Caco-2 (cell line): ENCODE measurements at regions of chr2 and their contacts with region 1.

Region 1: GRCh38 chr2:222318026-222318711 is 19.4 kb upstream of the PAX3 start:
- DNase-seq: peak; percentile 74 to 83
- H3K4me3 ChIP-seq: peak overlapping the region; percentile 35
- H3K4me3 Mint-ChIP-seq: peak overlapping the region; percentile 79
- H3K27ac Mint-ChIP-seq: no peak overlapping the region
- H3K4me1 ChIP-seq: peaks cover 12% of the 10 kb centered on the region
- H3K4me1 Mint-ChIP-seq: no peaks in the 10 kb centered on the region
- H3K27me3 ChIP-seq: peaks cover 3% of the 10 kb centered on the region; the same call in 1 of the 2 replicates
- H3K27me3 Mint-ChIP-seq: peaks cover 34% of the 10 kb centered on the region
- CTCF ChIP-seq: peak; percentile 56 to 70

Region 2: GRCh38 chr2:222038067-222038802 is 279.9 kb before region 1 on chr2:
- CTCF ChIA-PET with region 1: interaction called, 8 read pairs
- POLR2A ChIA-PET with region 1: no interaction called
- intact Hi-C with region 1: loop called (anchors 5 kb)
- DNase-seq: peak in 1 of 2 experiments; percentile 18
- H3K4me3 ChIP-seq: no peak overlapping the region
- H3K4me3 Mint-ChIP-seq: no peak overlapping the region
- H3K27ac Mint-ChIP-seq: no peak overlapping the region
- H3K4me1 ChIP-seq: no peaks in the 10 kb centered on the region
- H3K4me1 Mint-ChIP-seq: no peaks in the 10 kb centered on the region
- H3K27me3 ChIP-seq: no peaks in the 10 kb centered on the region
- H3K27me3 Mint-ChIP-seq: no peaks in the 10 kb centered on the region
- CTCF ChIP-seq: peak; percentile 61 to 63

Region 3: DNA sequence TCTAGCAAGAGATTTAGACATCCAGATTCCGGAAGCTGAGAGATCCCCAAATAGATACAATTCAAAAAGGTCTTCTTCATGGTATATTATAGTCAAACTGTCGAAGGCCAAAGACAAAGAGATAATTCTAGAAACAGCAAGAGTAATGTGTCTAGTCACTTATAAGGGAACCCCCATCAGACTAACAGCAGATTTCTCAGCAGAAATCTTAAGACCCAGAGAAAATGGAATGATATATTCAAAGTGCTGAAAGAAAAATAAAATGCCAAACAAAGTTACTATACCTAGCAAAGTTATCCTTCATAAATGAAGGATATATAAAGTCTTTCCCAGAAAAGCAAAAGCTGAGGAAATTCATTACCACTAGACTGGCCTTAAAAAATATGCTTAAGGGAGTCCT is 16.7 kb after region 1 on chr2:
- CTCF ChIA-PET with region 1: interaction called, 16 read pairs
- POLR2A ChIA-PET with region 1: no interaction called
- intact Hi-C with region 1: no loop called
- DNase-seq: no peak
- H3K4me3 ChIP-seq: no peak overlapping the region
- H3K4me3 Mint-ChIP-seq: no peak overlapping the region
- H3K27ac Mint-ChIP-seq: no peak overlapping the region
- H3K4me1 ChIP-seq: no peaks in the 10 kb centered on the region
- H3K4me1 Mint-ChIP-seq: no peaks in the 10 kb centered on the region
- H3K27me3 ChIP-seq: no peaks in the 10 kb centered on the region
- H3K27me3 Mint-ChIP-seq: peaks cover 2% of the 10 kb centered on the region
- CTCF ChIP-seq: no peak

Region 4: DNA sequence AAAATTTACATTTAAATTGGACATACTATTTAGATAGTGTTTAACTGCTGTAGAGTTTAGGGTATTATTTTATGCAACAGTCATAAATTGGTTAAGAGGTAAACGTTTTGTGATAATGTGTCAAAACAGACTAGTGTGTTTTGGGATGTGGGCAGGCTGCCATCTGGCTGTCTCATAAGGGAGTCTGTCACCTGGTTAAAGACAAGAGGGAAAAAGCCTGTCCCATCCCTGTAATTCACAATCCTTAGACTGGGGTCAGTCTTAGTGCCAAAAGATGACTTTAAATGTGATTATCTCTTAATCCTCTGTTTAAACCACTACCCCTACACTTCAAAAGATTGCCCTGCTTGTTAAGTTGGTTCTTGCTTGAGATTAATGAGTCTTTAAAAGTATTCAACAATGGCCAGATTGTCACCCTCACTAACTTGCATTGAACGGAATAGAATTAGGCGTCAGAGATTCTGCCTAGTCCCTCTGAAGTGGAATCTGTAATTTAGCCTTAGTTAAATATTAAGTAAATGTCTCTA is 165.4 kb after region 1 on chr2:
- CTCF ChIA-PET with region 1: interaction called, 9 read pairs
- POLR2A ChIA-PET with region 1: no interaction called
- intact Hi-C with region 1: loop called (anchors 1 kb)
- DNase-seq: no peak
- H3K4me3 ChIP-seq: no peak overlapping the region
- H3K4me3 Mint-ChIP-seq: no peak overlapping the region
- H3K27ac Mint-ChIP-seq: no peak overlapping the region
- H3K4me1 ChIP-seq: no peaks in the 10 kb centered on the region
- H3K4me1 Mint-ChIP-seq: no peaks in the 10 kb centered on the region
- H3K27me3 ChIP-seq: peaks cover 1% of the 10 kb centered on the region
- H3K27me3 Mint-ChIP-seq: peaks cover 14% of the 10 kb centered on the region
- CTCF ChIP-seq: peak in 1 of 2 experiments; percentile 32

Region 5: GRCh38 chr2:222613715-222614331 is 295.7 kb after region 1 on chr2:
- CTCF ChIA-PET with region 1: interaction called, 8 read pairs
- POLR2A ChIA-PET with region 1: no interaction called
- intact Hi-C with region 1: loop called (anchors 1 kb)
- DNase-seq: peak in 1 of 2 experiments; percentile 63
- H3K4me3 ChIP-seq: no peak overlapping the region
- H3K4me3 Mint-ChIP-seq: no peak overlapping the region
- H3K27ac Mint-ChIP-seq: no peak overlapping the region
- H3K4me1 ChIP-seq: no peaks in the 10 kb centered on the region
- H3K4me1 Mint-ChIP-seq: no peaks in the 10 kb centered on the region
- H3K27me3 ChIP-seq: no peaks in the 10 kb centered on the region
- H3K27me3 Mint-ChIP-seq: no peaks in the 10 kb centered on the region
- CTCF ChIP-seq: peak; percentile 88 to 91